ENCODE measurements at regions of chr7 and their contacts with region 1.

Region 1: GRCh38 chr7:148575640-148576411 is 14.7 kb upstream of the C7orf33 start:
- DNase-seq: peak; percentile 57
- H3K4me3 Mint-ChIP-seq: no peak overlapping the region
- H3K27ac Mint-ChIP-seq: no peak overlapping the region
- H3K4me1 Mint-ChIP-seq: peaks cover 24% of the 10 kb centered on the region
- H3K27me3 Mint-ChIP-seq: peaks cover 19% of the 10 kb centered on the region

Region 2: DNA sequence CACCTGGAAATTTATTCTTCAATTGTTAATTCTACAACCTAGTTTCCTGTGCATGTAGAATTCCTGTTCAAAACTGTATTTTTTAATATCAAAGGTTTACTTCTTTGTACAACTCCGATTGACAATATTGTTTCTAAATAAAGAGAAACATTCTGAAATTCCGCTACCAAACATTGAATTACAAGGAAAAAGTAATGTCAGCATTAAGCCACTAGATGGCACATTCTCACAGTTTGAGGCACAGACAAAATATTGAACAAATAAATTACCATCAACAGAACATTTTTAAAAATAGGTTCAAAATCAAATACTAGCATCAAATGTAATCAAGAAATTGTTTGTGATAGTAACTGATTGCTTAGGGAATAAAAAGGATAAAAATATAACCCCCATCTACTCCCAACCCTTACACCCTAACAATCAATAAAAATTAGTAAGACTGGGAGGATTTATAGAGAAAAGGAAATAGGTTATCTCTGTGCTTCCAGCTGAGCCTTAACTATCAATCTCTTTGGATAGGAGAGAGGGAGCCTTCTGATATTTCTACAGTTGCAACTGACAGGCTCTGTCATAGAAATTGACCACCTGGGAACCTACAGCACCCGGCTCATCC is 71.8 kb before region 1 on chr7:
- intact Hi-C with region 1: no loop called
- DNase-seq: no peak
- H3K4me3 Mint-ChIP-seq: no peak overlapping the region
- H3K27ac Mint-ChIP-seq: no peak overlapping the region
- H3K4me1 Mint-ChIP-seq: peaks cover 23% of the 10 kb centered on the region
- H3K27me3 Mint-ChIP-seq: peaks cover 32% of the 10 kb centered on the region

Region 3: GRCh38 chr7:148590471-148590870 is 14.6 kb after region 1 on chr7 and contains the start of gene C7orf33:
- intact Hi-C with region 1: no loop called
- DNase-seq: no peak
- H3K4me3 Mint-ChIP-seq: no peak within 1 kb of the TSS
- H3K27ac Mint-ChIP-seq: no peak within 1 kb of the TSS
- H3K4me1 Mint-ChIP-seq: peaks cover 1% of the 10 kb centered on the region
- H3K27me3 Mint-ChIP-seq: peaks cover 45% of the 10 kb centered on the region
- total RNA-seq, gene C7orf33: not detected in 2 replicates

Region 4: GRCh38 chr7:148729984-148730733 is 154.3 kb after region 1 on chr7:
- intact Hi-C with region 1: loop called (anchors 1 kb)
- DNase-seq: no peak
- H3K4me3 Mint-ChIP-seq: no peak overlapping the region
- H3K27ac Mint-ChIP-seq: no peak overlapping the region
- H3K4me1 Mint-ChIP-seq: peaks cover 43% of the 10 kb centered on the region
- H3K27me3 Mint-ChIP-seq: no peaks in the 10 kb centered on the region

Region 5: GRCh38 chr7:148856891-148857290 is 281.1 kb after region 1 on chr7:
- intact Hi-C with region 1: no loop called
- DNase-seq: no peak
- H3K4me3 Mint-ChIP-seq: no peak overlapping the region
- H3K27ac Mint-ChIP-seq: peak overlapping the region; percentile 79
- H3K4me1 Mint-ChIP-seq: peaks cover 47% of the 10 kb centered on the region
- H3K27me3 Mint-ChIP-seq: no peaks in the 10 kb centered on the region